Mucosa of descending colon (tissue), 3 donors: ENCODE measurements at regions of chr1 and their contacts with region 1.

Region 1: GRCh38 chr1:110203021-110203661 is 7.0 kb upstream of the KCNC4 start:
- DNase-seq: peak in 1 of 3 donors; percentile 93
- ATAC-seq: peak; percentile 81
- H3K4me3 ChIP-seq: no peak overlapping the region
- H3K4me1 ChIP-seq: no peaks in the 10 kb centered on the region
- CTCF ChIP-seq: peak; percentile 60

Region 2: GRCh38 chr1:110312188-110313121 is 109.3 kb after region 1 on chr1:
- intact Hi-C with region 1: loop called (anchors 1 to 2 kb)
- DNase-seq: peak; percentile 68 to 86 (median 83)
- ATAC-seq: peak; percentile 98
- H3K4me3 ChIP-seq: no peak overlapping the region
- H3K4me1 ChIP-seq: peaks cover 8% of the 10 kb centered on the region
- CTCF ChIP-seq: peak; percentile 78

Region 3: GRCh38 chr1:110449661-110450651 is 246.8 kb after region 1 on chr1:
- intact Hi-C with region 1: loop called in 1 of 2 experiments (anchors 5 kb)
- DNase-seq: no peak
- ATAC-seq: no peak
- H3K4me3 ChIP-seq: no peak overlapping the region
- H3K4me1 ChIP-seq: no peaks in the 10 kb centered on the region
- CTCF ChIP-seq: no peak

Region 4: GRCh38 chr1:110460253-110461220 is 257.4 kb after region 1 on chr1:
- intact Hi-C with region 1: loop called in 1 of 2 experiments (anchors 2 kb)
- DNase-seq: peak in 2 of 3 donors; percentile 77 to 93
- ATAC-seq: peak; percentile 91
- H3K4me3 ChIP-seq: no peak overlapping the region
- H3K4me1 ChIP-seq: no peaks in the 10 kb centered on the region
- CTCF ChIP-seq: peak; percentile 84